Activated B cell treated with CpG ODN at 0.5 μM for 24 hours (primary cell): ENCODE measurements at regions of chr3 and their contacts with region 1.

Region 1: GRCh38 chr3:31634481-31634880 is 101.8 kb downstream of the STT3B start:
- DNase-seq: no peak
- ATAC-seq: no peak
- H3K4me3 Mint-ChIP-seq: no peak overlapping the region
- H3K27ac Mint-ChIP-seq: no peak overlapping the region
- H3K4me1 Mint-ChIP-seq: peaks cover 26% of the 10 kb centered on the region
- H3K27me3 Mint-ChIP-seq: no peaks in the 10 kb centered on the region
- CTCF ChIP-seq: no peak

Region 2: DNA sequence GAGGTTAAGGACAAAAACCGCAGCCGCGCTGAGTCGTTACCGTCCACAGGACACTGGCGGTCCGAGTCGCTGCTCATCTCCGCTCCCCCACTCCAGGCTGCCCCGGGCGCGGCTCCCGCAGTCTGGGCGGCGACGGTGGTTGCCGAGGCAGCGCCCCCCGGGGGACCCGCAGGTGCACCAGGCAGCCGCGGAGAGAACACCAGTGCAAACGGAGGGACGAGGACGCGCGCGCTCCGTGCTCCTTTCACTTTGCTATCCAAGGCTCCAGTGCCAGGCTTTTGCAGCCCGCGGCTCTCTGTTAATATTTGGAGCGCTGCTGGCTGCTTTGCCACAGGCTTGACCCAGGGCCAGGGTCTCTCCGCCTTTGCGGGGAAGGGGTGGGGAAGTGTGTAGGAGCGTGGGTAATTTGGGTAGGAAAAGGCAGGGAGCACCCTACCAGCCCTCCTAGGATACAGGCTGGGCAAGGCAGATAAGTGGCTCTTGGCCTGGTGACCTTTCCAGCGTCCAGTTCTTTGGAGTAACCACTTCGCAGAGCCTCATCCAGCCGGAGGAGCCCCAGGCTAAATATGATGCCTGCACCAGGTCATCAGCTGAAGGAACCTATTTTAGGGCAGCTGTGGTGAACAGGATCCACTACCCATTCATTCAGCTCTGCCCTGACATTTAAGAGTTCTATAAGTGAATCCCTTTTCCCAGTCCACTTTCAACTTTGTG is 739.8 kb before region 1 on chr3 and contains the start of gene GADL1:
- CTCF ChIA-PET with region 1: no interaction called
- POLR2A ChIA-PET with region 1: no interaction called
- intact Hi-C with region 1: no loop called
- DNase-seq: no peak
- ATAC-seq: no peak
- H3K4me3 Mint-ChIP-seq: no peak within 1 kb of the TSS
- H3K27ac Mint-ChIP-seq: no peak within 1 kb of the TSS
- H3K4me1 Mint-ChIP-seq: peaks cover 6% of the 10 kb centered on the region
- H3K27me3 Mint-ChIP-seq: peaks cover 17% of the 10 kb centered on the region
- CTCF ChIP-seq: no peak
- total RNA-seq, gene GADL1: not detected in 2 replicates

Region 3: DNA sequence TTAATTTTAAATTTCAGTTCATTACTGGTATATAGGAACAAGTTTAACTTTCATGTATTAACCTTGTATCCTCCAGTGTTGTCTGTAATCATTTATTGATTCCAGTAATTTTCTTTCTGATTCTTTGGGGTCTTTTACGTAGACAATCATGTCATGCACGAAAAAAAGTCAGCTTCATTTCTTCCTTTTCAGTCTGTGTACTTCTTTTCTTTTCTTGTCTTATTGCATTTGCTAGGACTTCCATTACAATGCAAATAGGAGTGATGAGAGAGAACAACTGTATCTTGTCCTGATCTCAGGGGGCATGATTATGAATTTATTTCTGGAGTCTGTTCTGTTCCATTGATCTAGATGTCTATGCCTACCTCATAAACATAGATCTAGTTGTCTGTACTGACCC is 45.3 kb before region 1 on chr3:
- CTCF ChIA-PET with region 1: no interaction called
- POLR2A ChIA-PET with region 1: no interaction called
- intact Hi-C with region 1: loop called (anchors 5 kb)
- DNase-seq: no peak
- ATAC-seq: no peak
- H3K4me3 Mint-ChIP-seq: no peak overlapping the region
- H3K27ac Mint-ChIP-seq: no peak overlapping the region
- H3K4me1 Mint-ChIP-seq: peaks cover 5% of the 10 kb centered on the region
- H3K27me3 Mint-ChIP-seq: no peaks in the 10 kb centered on the region
- CTCF ChIP-seq: no peak

Region 4: GRCh38 chr3:31622636-31623288 is 11.7 kb before region 1 on chr3:
- CTCF ChIA-PET with region 1: no interaction called
- POLR2A ChIA-PET with region 1: no interaction called
- intact Hi-C with region 1: loop called (anchors 2 kb)
- DNase-seq: no peak
- ATAC-seq: no peak
- H3K4me3 Mint-ChIP-seq: no peak overlapping the region
- H3K27ac Mint-ChIP-seq: no peak overlapping the region
- H3K4me1 Mint-ChIP-seq: peaks cover 36% of the 10 kb centered on the region
- H3K27me3 Mint-ChIP-seq: no peaks in the 10 kb centered on the region
- CTCF ChIP-seq: no peak